ENCODE measurements at regions of chr1 and their contacts with region 1.

Region 1: DNA sequence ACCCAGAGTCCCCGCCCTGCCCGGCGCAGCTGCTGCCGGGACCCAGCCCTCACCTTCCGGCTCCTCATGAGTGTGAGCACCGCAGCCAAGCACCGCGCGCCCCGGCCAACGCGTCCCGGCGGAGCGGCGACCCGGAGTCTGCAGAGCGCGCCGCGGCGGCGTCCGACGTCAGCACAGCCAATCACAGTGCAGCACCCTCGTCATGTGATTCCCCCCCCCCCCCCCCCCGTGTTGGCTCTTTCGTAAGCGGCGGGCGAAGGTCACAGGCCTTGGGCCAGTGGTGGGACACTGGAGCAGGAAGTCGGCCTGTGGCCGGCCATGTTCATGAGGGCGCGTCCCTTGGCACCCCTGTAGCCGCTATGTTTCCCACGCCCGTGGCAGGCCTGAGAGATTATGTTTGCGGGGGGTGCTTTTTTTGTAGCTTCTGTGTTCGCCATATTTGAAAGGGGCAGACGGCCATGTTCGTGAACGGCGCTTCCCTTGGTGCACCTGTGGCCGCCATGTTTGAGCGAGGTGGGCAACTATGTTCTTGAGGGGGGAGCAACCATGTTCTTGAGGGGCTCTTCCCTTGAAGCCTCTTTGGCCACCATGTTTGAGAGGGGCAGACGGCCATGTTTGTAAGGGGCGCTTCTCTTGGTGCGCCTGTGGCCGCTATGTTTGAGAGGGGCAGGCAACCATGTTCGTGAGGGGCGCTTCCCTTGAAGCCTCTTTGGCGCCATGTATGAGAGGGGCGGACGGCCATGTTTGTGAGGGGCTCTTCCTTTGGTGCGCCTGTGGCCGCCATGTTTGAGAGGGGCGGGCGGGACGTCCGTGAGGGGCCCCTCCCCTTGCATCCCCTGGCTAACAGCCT is at the start of gene C1orf174:
- DNase-seq: peak; percentile 90
- H3K4me3 Mint-ChIP-seq: peak within 1 kb of the TSS; percentile 90
- H3K27ac Mint-ChIP-seq: peak within 1 kb of the TSS; percentile 100
- H3K4me1 Mint-ChIP-seq: peaks cover 49% of the 10 kb centered on the region
- H3K27me3 Mint-ChIP-seq: no peaks in the 10 kb centered on the region
- total RNA-seq, gene C1orf174: 45.1 TPM in 2 replicates

Region 2: GRCh38 chr1:2545759-2546514 is 1354.4 kb before region 1 on chr1:
- intact Hi-C with region 1: loop called (anchors 10 kb)
- DNase-seq: peak; percentile 87
- H3K4me3 Mint-ChIP-seq: peak overlapping the region; percentile 91
- H3K27ac Mint-ChIP-seq: peak overlapping the region; percentile 61
- H3K4me1 Mint-ChIP-seq: peaks cover 7% of the 10 kb centered on the region
- H3K27me3 Mint-ChIP-seq: peaks cover 13% of the 10 kb centered on the region

Region 3: DNA sequence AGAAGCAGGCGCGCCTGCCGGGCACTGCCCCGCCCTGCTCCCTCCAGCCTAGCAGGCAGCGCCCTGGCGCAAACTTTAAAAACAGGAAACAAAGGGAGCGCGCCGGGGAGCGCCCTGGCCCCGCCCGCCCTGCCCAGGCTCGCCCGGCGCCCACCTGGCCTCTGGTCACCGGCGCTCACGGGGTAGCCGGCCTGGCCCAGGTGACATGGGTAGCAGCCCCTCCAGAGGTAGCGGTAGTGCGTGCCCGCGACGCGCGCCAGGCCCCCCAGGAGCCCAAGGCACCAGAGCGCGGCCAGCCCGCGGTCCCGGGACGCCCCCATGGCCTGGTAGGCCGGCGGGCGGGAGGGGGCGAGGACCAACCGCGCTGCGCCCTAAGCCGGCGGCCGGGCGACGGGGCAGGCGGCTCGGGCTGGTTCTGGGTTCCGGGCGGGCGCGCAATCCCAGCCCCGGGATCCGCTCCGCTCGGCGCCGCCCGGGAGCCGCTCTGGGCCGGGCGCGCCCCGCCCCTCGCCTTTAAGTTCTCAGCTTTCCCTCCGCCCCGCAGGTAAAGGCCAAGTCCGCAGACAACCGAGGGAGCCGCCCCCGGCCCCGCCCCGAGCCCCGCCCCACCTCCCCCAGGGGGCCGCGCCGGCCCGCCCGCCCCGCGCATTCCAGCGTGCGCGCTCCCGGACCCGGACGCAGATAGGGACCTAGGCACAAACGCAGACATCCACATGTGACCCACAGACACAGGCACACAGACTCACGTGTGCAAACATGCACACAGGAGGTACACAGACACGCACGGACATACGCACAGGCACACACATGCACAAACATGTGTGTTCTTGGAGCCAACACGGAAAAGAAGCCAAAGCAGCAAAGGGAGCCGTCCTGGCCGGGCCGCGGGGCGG is 369.2 kb before region 1 on chr1:
- intact Hi-C with region 1: loop called (anchors 5 kb)
- DNase-seq: peak; percentile 63
- H3K4me3 Mint-ChIP-seq: peak overlapping the region; percentile 78
- H3K27ac Mint-ChIP-seq: peak overlapping the region; percentile 87
- H3K4me1 Mint-ChIP-seq: no peaks in the 10 kb centered on the region
- H3K27me3 Mint-ChIP-seq: peaks cover 2% of the 10 kb centered on the region

Region 4: DNA sequence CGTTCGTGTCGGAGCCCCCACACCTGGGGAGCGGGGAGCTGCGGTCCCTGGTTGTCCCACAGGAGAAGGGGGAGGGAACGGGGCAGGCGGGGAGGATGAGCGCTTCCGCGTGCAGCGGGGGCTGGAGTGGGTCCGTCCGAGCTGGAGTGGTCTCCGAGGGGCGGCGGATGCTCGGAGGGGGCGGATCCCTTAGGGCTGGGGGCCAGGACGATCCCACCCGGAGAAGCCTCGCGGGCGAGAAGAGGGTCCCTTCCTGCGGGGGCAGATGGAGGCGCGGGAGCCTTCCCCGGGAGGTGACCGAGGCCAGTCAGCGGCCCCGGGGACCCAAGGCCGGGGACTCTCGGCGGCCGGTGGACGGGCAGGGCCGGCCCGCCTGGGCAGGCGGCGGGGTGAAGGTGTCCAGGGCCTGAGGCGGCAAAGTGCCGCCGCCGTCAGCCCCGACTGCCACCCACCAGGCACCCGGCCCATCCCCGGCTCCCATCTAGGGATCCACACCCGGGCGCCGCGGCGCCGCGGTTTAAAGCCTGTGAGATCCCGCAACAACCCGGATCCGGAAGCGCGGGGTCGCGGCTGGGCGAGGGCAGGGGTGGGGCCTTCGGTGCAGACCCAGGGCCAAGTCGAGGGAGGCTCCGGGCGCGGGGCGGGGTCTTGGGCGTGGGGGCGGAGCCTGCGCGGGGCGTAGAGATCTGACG is 153.4 kb before region 1 on chr1:
- intact Hi-C with region 1: loop called (anchors 1 kb)
- DNase-seq: peak; percentile 86
- H3K4me3 Mint-ChIP-seq: peak overlapping the region; percentile 84
- H3K27ac Mint-ChIP-seq: no peak overlapping the region
- H3K4me1 Mint-ChIP-seq: peaks cover 31% of the 10 kb centered on the region
- H3K27me3 Mint-ChIP-seq: peaks cover 2% of the 10 kb centered on the region

Region 5: DNA sequence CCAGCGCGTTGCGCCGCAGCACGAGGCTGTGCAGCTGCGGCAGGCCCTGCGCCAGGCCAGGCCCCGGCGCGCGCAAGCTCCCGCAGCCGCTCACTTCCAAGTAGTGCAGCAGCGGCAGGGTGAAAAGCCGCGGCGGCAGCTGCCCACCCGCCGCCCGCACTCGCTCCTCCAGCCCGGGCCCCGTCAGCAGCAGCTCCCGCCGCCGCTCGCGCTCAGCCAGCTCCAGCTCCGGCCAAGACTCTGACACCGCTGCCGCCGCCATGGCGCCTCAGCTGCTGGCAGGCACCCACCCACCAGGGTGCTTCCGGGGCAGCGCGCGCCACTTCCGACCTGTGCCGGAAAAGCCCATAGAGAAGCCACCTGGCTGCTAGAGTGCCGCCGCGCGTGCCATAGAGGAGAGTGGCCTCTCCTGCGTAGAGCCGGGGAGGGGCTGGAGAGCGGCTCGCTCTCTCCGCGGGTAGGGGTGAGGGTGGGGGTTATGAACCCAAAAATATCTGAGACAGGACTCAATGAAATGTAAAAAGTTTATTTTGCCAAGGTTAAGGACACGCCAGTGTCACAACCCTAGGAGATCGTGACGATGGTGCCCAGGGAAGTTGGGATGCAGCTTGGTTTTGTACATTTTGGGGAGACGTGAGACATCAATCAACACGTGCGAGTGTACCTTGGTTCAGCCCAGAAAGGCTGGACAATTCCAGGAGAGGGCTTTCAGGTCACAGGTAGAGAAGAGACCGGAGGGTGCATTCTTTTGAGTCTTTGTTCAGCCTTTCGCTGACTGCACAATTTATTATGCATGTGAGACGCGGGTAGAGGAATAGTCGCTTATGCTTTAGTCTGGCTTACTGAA is 103.9 kb before region 1 on chr1 and contains the start of gene LRRC47:
- intact Hi-C with region 1: loop called (anchors 1 kb)
- DNase-seq: peak; percentile 92
- H3K4me3 Mint-ChIP-seq: peak within 1 kb of the TSS; percentile 91
- H3K27ac Mint-ChIP-seq: peak within 1 kb of the TSS; percentile 89
- H3K4me1 Mint-ChIP-seq: peaks cover 42% of the 10 kb centered on the region
- H3K27me3 Mint-ChIP-seq: peaks cover 5% of the 10 kb centered on the region
- total RNA-seq, gene LRRC47: 45.2 and 50.1 TPM in 2 replicates

Region 6: GRCh38 chr1:3827813-3828307 is 72.5 kb before region 1 on chr1:
- intact Hi-C with region 1: no loop called
- DNase-seq: no peak
- H3K4me3 Mint-ChIP-seq: no peak overlapping the region
- H3K27ac Mint-ChIP-seq: no peak overlapping the region
- H3K4me1 Mint-ChIP-seq: no peaks in the 10 kb centered on the region
- H3K27me3 Mint-ChIP-seq: no peaks in the 10 kb centered on the region

Region 7: GRCh38 chr1:3922201-3922725 is 21.9 kb after region 1 on chr1:
- intact Hi-C with region 1: loop called (anchors 2 kb)
- DNase-seq: no peak
- H3K4me3 Mint-ChIP-seq: no peak overlapping the region
- H3K27ac Mint-ChIP-seq: no peak overlapping the region
- H3K4me1 Mint-ChIP-seq: no peaks in the 10 kb centered on the region
- H3K27me3 Mint-ChIP-seq: peaks cover 2% of the 10 kb centered on the region

Measured in activated T-helper 1 cell treated with anti-CD3 and anti-CD28 coated beads, Interleukin-12 subunit alpha, Interleukin-12 subunit beta, Interleukin-2, Interleukin-4 antibody, amounts not matched to agents 30 ng/mL and 10 ng/mL and 1 ng/mL, durations not matched to agents 14 hours and 24 hours and 36 hours (primary cell).